ENCODE measurements at regions of chr10 and their contacts with region 1.

Region 1: DNA sequence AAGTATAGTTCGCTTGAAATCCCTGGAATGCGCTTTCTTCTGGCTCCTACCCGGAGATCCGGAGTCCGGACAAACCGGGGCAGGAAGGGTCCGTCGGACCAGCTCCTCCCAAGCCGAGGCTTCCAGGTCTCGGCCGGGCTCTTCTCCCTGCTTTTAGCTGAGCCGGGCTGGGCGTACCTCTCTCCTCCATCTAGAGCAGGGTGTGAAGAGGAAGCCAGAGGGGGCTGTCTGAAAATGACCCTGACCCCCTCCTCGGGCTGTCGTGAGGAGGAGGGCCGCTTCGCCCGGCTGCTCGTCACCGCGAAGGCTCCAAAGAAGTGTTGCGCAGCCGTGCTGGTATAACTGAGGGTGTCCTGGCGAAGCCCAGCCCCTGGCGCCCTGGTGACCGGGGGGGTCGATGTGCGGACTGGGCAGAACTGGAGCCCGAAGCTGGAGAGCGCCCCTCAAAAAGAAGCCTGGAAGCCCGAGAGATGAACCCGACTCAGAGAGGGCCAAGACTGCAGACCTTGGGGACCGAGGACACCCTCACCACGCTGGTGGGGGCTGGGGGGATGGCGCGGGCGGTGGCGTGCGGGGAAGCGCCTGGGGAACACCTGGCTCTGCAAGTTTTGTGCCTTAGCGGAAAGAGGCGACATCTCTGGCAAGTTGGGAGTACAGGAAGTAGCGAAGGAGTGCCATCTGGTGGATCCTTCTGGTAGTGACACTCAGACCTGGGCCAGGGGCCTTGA is 5.7 kb downstream of the KAZALD1 start:
- DNase-seq: peak; percentile 70 to 75
- H3K4me3 ChIP-seq: peak overlapping the region; percentile 82
- H3K27ac ChIP-seq: no peak overlapping the region
- H3K4me1 ChIP-seq: peaks cover 16% of the 10 kb centered on the region
- H3K27me3 ChIP-seq: no peaks in the 10 kb centered on the region
- CTCF ChIP-seq: peak; percentile 74

Region 2: DNA sequence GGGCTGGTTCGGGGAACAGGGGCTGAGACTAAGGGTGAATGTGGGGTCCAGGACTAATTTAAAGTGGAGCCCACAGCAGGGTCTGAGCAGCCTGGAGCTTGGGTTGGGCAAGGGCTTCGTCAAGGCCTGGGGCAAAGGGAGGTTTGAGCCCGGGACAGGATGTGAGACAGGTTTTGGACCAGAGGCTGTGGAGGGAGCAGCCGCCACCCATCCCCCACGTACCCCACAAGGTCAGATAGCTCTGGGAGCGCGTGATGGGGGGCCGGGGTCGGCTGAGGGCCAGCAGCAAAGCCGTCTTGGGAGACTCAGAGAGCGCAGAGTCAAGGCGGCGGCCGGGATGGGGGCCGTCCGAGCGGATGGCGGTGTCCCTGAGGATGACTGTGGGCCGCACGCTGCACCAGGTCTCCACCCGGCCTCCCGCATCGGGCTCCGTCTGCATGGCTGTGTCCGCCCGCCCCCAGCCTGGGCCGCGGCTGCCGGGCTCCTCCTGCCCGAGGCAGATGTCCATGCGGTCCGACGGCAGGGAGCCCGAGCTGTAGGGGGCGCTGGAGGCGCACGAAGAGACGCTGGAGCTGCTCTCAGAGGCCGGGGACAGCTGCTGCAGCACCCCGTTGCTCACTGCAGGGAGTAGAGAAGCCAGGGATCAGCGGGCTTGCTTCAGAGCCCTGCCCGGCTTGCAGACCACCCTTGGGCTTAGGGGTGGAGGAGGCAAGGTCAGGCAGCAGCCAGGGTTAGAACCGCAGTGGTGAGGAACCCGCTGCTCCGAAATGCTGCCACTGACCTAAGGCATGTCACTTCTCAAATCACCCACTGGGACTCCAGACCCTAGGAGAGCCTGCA is 48.7 kb before region 1 on chr10:
- CTCF ChIA-PET with region 1: interaction called, 6 read pairs
- POLR2A ChIA-PET with region 1: no interaction called
- intact Hi-C with region 1: loop called (anchors 1 kb)
- DNase-seq: peak; percentile 58 to 81
- H3K4me3 ChIP-seq: no peak overlapping the region
- H3K27ac ChIP-seq: no peak overlapping the region
- H3K4me1 ChIP-seq: no peaks in the 10 kb centered on the region
- H3K27me3 ChIP-seq: no peaks in the 10 kb centered on the region
- CTCF ChIP-seq: peak; percentile 72

Region 3: GRCh38 chr10:101031128-101031795 is 36.3 kb before region 1 on chr10 and contains the starts of genes PDZD7 and SFXN3:
- CTCF ChIA-PET with region 1: no interaction called
- POLR2A ChIA-PET with region 1: interaction called, 4 read pairs
- intact Hi-C with region 1: loop called (anchors 5 kb)
- DNase-seq: peak; percentile 74 to 91
- H3K4me3 ChIP-seq: peak within 1 kb of the TSS; percentile 82
- H3K27ac ChIP-seq: peak within 1 kb of the TSS; percentile 52
- H3K4me1 ChIP-seq: peaks cover 15% of the 10 kb centered on the region
- H3K27me3 ChIP-seq: no peaks in the 10 kb centered on the region
- CTCF ChIP-seq: no peak
- total RNA-seq, gene PDZD7: 2.3 and 2.8 TPM in 2 replicates
- total RNA-seq, gene SFXN3: 30.6 and 35.2 TPM in 2 replicates

Region 4: DNA sequence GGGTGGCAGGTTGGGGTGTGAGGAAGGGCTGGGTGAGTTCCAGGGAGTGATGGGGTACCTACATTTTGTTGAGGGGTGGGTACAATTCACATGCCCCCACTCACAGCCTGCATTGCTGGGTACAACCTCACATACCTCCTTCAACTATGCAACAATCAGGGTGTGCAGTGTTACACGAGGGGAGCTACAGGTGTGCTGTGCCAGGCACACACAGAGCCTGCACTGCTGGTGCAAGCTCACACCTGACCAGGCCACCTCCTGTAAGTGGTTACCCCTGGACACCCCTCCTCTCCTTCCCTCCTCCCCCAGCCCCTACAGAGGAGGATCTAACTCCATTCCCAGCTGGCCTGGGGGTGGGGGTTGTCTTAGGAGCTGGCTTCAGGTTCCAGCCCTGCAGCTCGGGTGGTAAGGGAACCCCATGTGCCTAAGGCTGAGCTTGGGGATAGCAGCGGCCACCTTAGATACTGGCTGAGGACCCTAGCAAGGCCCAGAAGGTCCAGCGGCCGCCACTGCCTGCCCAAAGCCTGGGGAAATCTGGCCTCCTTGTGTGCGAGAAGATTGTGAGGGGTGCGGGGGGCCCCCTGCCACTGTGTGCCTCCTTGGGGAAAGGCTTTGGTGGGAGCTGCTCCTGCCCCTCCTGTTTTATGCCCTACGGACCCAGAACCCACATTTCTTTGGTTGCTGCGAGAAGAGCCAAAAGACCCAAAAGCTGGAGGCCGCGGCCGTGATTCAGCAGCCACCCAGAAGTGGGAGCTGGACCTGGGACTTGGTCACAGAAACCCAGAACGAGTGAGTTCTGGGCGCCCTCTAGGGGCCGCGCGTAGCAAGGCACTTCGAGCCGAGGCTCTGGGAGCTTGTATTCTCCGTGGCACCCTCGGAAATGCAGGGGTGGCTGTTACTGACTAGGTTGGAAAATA is 74.4 kb after region 1 on chr10:
- CTCF ChIA-PET with region 1: interaction called, 13 read pairs
- POLR2A ChIA-PET with region 1: no interaction called
- intact Hi-C with region 1: no loop called
- DNase-seq: peak; percentile 36 to 70
- H3K4me3 ChIP-seq: no peak overlapping the region
- H3K27ac ChIP-seq: no peak overlapping the region
- H3K4me1 ChIP-seq: no peaks in the 10 kb centered on the region
- H3K27me3 ChIP-seq: peaks cover 15% of the 10 kb centered on the region; the same call in 1 of the 2 replicates
- CTCF ChIP-seq: peak; percentile 90